Astrocyte of the cerebellum (primary cell): ENCODE measurements at regions of chr16 and their contacts with region 1.

Region 1: GRCh38 chr16:55465077-55465896 is 13.7 kb upstream of the MMP2 start:
- DNase-seq: peak; percentile 76
- H3K4me3 ChIP-seq: no peak overlapping the region
- CTCF ChIP-seq: peak; percentile 97

Region 2: DNA sequence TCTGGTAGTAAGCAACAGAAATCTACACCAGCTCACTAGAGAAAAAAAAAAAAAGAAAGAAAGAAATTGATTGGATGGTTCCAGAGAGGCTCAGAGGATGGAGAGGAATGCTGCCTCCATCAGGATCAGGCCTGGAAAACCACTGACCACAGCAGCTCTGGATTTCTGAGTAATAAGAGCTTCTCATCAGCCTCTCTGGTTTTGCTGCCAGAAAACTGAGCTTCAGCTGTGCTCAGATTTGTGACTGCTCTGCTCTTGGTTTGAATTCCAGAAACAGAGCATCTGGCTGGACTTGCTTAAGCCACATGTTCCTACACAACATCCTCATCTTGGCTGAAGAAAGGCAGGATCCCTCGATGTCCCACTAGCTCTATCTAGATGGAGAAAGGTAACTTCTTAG is 115.4 kb before region 1 on chr16:
- in situ Hi-C with region 1: no loop called
- DNase-seq: no peak
- H3K4me3 ChIP-seq: no peak overlapping the region
- CTCF ChIP-seq: no peak

Region 3: GRCh38 chr16:55389426-55390073 is 75.7 kb before region 1 on chr16:
- in situ Hi-C with region 1: no loop called
- DNase-seq: no peak
- H3K4me3 ChIP-seq: no peak overlapping the region
- CTCF ChIP-seq: no peak

Region 4: GRCh38 chr16:55552621-55553020 is 87.3 kb after region 1 on chr16:
- in situ Hi-C with region 1: loop called (anchors 5 kb)
- DNase-seq: no peak
- H3K4me3 ChIP-seq: no peak overlapping the region
- CTCF ChIP-seq: no peak